PC-3 (cell line): ENCODE measurements at regions of chr18 and their contacts with region 1.

Region 1: GRCh38 chr18:73283788-73284187 is 416.0 kb upstream of the NETO1 start:
- DNase-seq: peak; percentile 97
- ATAC-seq: peak; percentile 68
- H3K4me3 ChIP-seq: peak overlapping the region; percentile 57
- H3K27ac ChIP-seq: peak overlapping the region; percentile 99
- H3K4me1 ChIP-seq: peaks cover 49% of the 10 kb centered on the region
- H3K27me3 ChIP-seq: no peaks in the 10 kb centered on the region
- CTCF ChIP-seq: no peak

Region 2: GRCh38 chr18:73047688-73048087 is 236.1 kb before region 1 on chr18:
- CTCF ChIA-PET with region 1: no interaction called
- POLR2A ChIA-PET with region 1: no interaction called
- intact Hi-C with region 1: loop called (anchors 5 kb)
- DNase-seq: peak; percentile 24
- ATAC-seq: peak; percentile 76
- H3K4me3 ChIP-seq: no peak overlapping the region
- H3K27ac ChIP-seq: no peak overlapping the region
- H3K4me1 ChIP-seq: no peaks in the 10 kb centered on the region
- H3K27me3 ChIP-seq: no peaks in the 10 kb centered on the region
- CTCF ChIP-seq: no peak

Region 3: GRCh38 chr18:73235491-73235890 is 48.3 kb before region 1 on chr18:
- CTCF ChIA-PET with region 1: no interaction called
- POLR2A ChIA-PET with region 1: no interaction called
- intact Hi-C with region 1: loop called (anchors 2 kb)
- DNase-seq: peak; percentile 93
- ATAC-seq: peak; percentile 100
- H3K4me3 ChIP-seq: no peak overlapping the region
- H3K27ac ChIP-seq: peak overlapping the region; percentile 50
- H3K4me1 ChIP-seq: peaks cover 12% of the 10 kb centered on the region
- H3K27me3 ChIP-seq: no peaks in the 10 kb centered on the region
- CTCF ChIP-seq: no peak

Region 4: DNA sequence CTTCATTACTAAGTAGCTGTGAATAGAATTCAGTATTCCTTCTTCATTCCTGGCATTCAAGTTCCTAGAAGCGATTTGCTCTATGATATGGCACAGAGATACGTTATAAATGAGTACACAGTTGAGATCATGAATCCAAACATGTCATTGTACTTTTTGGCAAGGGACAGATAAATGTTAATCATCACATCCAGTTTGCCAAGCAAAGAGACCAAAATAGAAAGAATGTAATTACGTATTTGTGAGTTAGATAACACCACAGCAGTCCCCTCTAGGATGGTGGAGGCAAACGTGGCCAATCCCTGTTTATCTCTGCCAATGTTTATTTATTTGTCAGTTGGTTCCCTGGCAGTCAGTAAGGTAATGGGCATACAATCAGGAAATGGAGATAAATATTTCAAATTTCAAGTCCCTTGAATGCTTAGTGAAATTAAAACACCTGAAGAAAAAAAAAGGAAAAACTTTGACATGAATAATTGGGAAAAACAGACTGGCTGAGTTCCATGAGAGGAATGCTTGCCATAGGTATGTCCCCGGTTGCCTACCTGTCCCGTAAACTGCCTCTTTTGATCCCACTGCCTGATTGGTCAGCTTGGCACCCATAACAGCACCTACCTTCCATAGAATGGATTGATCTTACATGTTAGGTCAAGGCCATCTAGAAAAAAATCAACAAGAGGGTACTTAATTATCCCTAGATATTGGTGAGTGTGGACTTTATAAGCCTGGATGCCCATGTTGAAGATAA is 35.1 kb after region 1 on chr18:
- CTCF ChIA-PET with region 1: no interaction called
- POLR2A ChIA-PET with region 1: no interaction called
- intact Hi-C with region 1: loop called (anchors 1 kb)
- DNase-seq: peak; percentile 91
- ATAC-seq: peak; percentile 89
- H3K4me3 ChIP-seq: peak overlapping the region; percentile 29; the same call in 1 of the 2 replicates
- H3K27ac ChIP-seq: peak overlapping the region; percentile 87
- H3K4me1 ChIP-seq: peaks cover 49% of the 10 kb centered on the region
- H3K27me3 ChIP-seq: no peaks in the 10 kb centered on the region
- CTCF ChIP-seq: no peak